HCT116 (cell line): ENCODE measurements at regions of chr6 and their contacts with region 1.

Region 1: GRCh38 chr6:114747987-114748630 is 405.3 kb upstream of the HS3ST5 start:
- DNase-seq: peak; percentile 16
- ATAC-seq: no peak
- H3K4me3 ChIP-seq: no peak overlapping the region
- H3K27ac ChIP-seq: no peak overlapping the region
- H3K4me1 ChIP-seq: no peaks in the 10 kb centered on the region
- H3K27me3 ChIP-seq: no peaks in the 10 kb centered on the region
- CTCF ChIP-seq: peak; percentile 22 to 77 (median 59); a peak in 5 of 6 replicates
- POLR2A ChIP-seq: no peak
- RAD21 ChIP-seq: peak; percentile 57

Region 2: DNA sequence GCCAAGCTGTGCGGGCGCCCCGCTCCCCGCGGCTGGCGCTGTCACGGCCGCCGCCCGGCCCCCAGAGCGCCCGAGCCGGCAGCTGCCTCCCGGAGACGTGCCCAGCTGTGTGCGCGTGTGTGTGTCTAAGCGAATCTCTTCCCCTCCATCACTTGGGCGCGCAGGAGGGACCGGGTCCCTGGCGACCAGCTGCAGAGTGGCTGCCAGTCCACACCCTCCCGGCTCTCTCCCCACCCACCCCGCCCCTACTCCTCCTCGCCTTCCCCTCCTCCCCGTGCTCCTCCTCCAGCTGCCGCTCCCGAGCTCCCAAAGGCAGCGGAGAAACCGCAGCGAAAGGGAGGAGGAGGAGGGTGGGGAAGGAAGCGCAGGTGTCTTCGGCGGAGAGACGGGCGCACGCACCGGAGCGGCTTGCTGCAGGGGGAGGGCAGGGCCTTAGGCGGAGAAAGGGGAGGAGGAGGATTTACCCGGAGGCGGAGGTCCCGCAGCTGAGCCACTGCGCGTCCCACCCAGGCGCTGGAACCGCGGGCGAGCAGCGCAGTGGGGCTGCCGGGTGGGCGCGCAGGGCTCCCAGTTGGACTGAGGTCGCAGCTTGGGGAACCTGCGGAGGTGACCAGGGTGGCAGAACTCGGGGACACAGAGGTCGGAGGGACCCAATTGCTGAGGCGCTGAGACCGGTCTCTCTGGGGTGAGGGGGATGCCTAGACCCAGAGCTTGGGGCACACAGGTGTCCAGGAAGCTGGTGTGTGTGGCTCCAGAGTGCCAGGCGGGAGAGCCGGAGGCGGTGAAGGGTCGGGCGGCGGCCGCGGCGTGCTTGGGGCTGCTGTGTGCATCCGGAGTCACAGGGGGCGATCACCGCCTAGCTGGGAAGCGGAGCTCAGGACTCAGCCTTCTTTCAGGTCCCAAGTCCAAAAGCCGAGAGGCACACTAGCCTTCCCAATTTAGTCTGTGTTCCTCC is 405.0 kb before region 1 on chr6 and contains the start of gene HS3ST5:
- CTCF ChIA-PET with region 1: no interaction called
- POLR2A ChIA-PET with region 1: no interaction called
- RAD21 ChIA-PET with region 1: no interaction called
- intact Hi-C with region 1: no loop called
- DNase-seq: peak; percentile 6
- ATAC-seq: peak; percentile 96
- H3K4me3 ChIP-seq: no peak within 1 kb of the TSS
- H3K27ac ChIP-seq: no peak within 1 kb of the TSS
- H3K4me1 ChIP-seq: no peaks in the 10 kb centered on the region
- H3K27me3 ChIP-seq: peaks cover 13% of the 10 kb centered on the region; the same call in 1 of the 2 replicates
- CTCF ChIP-seq: peak in 2 of 3 experiments; percentile 32 to 35; a peak in 2 of 6 replicates
- POLR2A ChIP-seq: no peak
- RAD21 ChIP-seq: peak; percentile 41; the same call in 1 of the 2 replicates
- total RNA-seq, gene HS3ST5: not detected

Region 3: DNA sequence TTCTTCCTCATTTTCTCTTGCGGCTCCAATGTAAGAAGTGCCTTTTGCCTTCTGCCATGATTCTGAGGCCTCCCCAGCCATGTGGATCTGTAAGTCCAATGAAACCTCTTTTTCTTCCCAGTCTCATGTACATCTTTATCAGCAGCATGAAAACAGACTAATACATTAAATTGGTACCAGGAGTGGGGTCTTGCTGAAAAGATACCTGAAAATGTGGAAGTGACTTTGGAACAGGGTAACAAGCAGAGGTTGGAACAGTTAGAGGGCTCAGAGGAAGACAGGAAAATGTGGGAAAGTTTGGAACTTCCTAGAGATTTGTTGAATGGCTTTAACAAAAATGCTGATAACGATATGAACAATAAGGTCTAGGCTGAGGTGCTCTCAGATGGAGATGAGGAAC is 88.6 kb before region 1 on chr6:
- CTCF ChIA-PET with region 1: no interaction called
- POLR2A ChIA-PET with region 1: no interaction called
- RAD21 ChIA-PET with region 1: no interaction called
- intact Hi-C with region 1: no loop called
- DNase-seq: no peak
- ATAC-seq: no peak
- H3K4me3 ChIP-seq: no peak overlapping the region
- H3K27ac ChIP-seq: no peak overlapping the region
- H3K4me1 ChIP-seq: no peaks in the 10 kb centered on the region
- H3K27me3 ChIP-seq: no peaks in the 10 kb centered on the region
- CTCF ChIP-seq: no peak
- POLR2A ChIP-seq: no peak
- RAD21 ChIP-seq: no peak

Region 4: DNA sequence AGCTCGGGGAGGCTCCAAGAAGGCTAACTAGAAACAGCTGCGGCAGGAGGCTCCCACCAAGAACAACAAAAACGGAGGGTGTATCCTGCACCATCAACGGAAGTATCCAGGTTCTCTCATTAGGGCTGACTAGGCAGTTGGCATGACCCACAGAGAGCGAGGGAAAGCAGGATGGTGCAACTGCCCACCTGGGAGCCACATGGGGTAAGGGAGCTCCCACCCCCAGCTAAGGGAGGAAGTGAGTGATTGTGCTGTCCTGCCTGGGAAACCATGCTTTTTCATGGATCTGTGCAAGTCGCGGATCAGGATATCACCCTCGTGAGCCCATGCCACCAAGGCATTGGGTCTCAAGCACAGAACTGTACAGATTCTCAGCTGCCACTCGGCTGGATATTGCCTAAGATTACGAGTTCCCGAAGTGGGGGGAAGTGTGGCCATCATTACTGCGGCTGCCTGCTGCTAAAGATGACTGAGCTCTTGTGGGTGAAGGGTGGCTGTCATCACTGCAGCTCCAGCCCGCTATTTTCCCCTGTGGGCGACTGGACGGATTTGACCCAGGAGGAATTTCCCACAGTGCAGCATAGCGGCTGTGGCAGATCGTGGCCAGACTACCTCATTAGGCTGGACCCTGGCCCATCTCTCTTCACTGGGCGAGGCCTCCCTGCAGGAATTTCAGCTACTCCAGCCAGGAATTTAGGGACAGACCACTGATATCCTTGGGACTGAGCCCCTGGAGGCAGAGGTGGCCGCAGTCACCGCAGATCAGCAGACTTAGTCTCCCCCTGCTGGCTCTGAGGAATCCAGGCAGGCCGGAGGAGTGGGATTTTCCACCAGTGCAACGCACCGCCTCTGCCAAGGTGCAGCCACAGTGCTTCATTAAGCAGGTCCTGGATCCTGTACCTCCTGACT is 796.9 kb after region 1 on chr6:
- CTCF ChIA-PET with region 1: no interaction called
- POLR2A ChIA-PET with region 1: no interaction called
- RAD21 ChIA-PET with region 1: no interaction called
- intact Hi-C with region 1: loop called (anchors 1 kb)
- DNase-seq: no peak
- ATAC-seq: peak; percentile 73
- H3K4me3 ChIP-seq: no peak overlapping the region
- H3K27ac ChIP-seq: no peak overlapping the region
- H3K4me1 ChIP-seq: no peaks in the 10 kb centered on the region
- H3K27me3 ChIP-seq: no peaks in the 10 kb centered on the region
- CTCF ChIP-seq: peak in 2 of 3 experiments; percentile 42 to 44; a peak in 3 of 6 replicates
- POLR2A ChIP-seq: no peak
- RAD21 ChIP-seq: peak; percentile 45

Region 5: GRCh38 chr6:115602466-115602865 is 854.4 kb after region 1 on chr6:
- CTCF ChIA-PET with region 1: no interaction called
- POLR2A ChIA-PET with region 1: no interaction called
- RAD21 ChIA-PET with region 1: no interaction called
- intact Hi-C with region 1: no loop called
- DNase-seq: no peak
- ATAC-seq: no peak
- H3K4me3 ChIP-seq: no peak overlapping the region
- H3K27ac ChIP-seq: no peak overlapping the region
- H3K4me1 ChIP-seq: no peaks in the 10 kb centered on the region
- H3K27me3 ChIP-seq: peaks cover 17% of the 10 kb centered on the region; the same call in 1 of the 2 replicates
- CTCF ChIP-seq: no peak
- POLR2A ChIP-seq: no peak
- RAD21 ChIP-seq: no peak

Region 6: GRCh38 chr6:115896538-115897129 is 1148.5 kb after region 1 on chr6:
- CTCF ChIA-PET with region 1: interaction called, 4 read pairs
- POLR2A ChIA-PET with region 1: no interaction called
- RAD21 ChIA-PET with region 1: no interaction called
- intact Hi-C with region 1: loop called (anchors 1 kb)
- DNase-seq: peak; percentile 34
- ATAC-seq: peak; percentile 70
- H3K4me3 ChIP-seq: no peak overlapping the region
- H3K27ac ChIP-seq: no peak overlapping the region
- H3K4me1 ChIP-seq: no peaks in the 10 kb centered on the region
- H3K27me3 ChIP-seq: peaks cover 9% of the 10 kb centered on the region; the same call in 1 of the 2 replicates
- CTCF ChIP-seq: peak; percentile 51 to 84 (median 70); a peak in 5 of 6 replicates
- POLR2A ChIP-seq: no peak
- RAD21 ChIP-seq: peak; percentile 78